ENCODE measurements at regions of chr11 and their contacts with region 1.

Region 1: DNA sequence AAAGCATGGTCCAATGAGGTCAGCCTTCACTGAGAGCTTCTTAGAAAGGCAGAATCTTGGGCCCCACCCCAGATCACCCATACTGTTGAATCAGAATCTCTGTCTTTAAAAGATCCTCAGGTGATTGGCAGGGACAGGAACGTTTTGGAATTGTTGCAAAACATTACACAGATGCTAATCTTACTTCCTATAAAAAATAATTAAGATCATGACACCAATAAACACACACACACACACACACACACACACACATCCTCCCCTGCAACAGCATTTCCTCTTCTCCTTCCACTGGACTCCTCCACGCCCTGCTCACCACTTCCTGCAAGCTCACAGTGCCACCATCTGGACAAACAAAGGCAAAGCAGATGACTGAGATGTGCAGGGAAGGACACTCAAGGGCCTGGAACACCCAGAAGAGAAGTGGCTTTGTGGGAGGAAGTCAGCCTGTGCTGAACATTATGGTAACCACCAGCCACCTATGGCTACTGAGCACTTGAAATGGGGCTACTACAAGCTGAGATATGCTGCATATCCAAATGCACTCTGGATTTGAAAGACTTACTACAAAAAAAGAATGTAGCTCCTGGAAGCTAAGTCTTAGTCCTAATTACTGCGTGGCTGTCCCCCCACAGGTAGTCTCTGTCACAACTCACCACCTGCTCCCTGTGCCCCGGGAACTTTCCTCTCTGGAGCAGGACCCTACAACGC is 65.6 kb downstream of the BTG4 start:
- DNase-seq: peak; percentile 81
- H3K4me3 ChIP-seq: no peak overlapping the region
- H3K27ac ChIP-seq: no peak overlapping the region
- H3K4me1 ChIP-seq: no peaks in the 10 kb centered on the region
- H3K27me3 ChIP-seq: no peaks in the 10 kb centered on the region
- CTCF ChIP-seq: peak; percentile 93 to 96

Region 2: DNA sequence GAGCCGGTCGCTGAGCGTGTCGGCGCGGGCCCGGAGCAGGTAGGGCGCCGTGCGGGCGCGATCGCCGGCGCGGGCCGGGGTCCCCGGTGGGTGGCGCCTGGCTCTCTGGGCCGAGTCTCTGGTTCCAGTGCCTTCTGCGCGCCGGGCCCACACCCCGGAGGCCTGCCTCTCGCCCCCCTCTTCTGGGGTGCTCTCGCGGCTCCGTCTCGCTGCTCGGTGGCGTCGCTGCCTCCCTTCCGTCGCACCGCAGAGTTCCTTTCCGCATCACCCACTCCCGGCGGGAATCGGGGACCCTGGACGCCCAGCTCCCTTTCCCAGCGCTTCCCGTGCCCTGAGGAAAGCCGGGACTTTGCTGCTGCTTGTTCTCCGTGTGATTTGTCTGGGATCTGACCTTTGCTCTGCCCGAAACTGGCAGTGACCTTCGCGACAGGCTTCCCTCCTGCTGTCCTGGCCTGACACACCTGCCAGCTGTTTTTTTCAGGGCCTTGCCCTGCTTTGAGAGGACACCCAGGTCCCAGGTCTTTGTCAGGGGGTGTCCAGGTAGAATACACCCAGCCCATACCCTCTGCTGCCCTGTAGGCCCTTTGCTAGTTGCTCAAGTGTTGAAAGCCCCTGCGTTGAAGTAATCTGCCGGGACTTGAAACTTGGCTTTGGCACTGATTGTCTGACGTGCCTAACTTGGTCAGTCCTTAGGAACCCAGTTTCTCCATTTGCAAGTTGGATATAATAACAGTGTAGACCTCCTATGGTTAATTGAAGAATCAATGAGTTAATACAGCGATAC is 1016.1 kb before region 1 on chr11:
- CTCF ChIA-PET with region 1: no interaction called
- dilution Hi-C with region 1: no loop called
- in situ Hi-C with region 1: no loop called
- intact Hi-C with region 1: loop called (anchors 2 kb)
- DNase-seq: peak; percentile 74
- H3K4me3 ChIP-seq: peak overlapping the region; percentile 60 to 93 (median 90)
- H3K27ac ChIP-seq: peak overlapping the region; percentile 67
- H3K4me1 ChIP-seq: peaks cover 17% of the 10 kb centered on the region
- H3K27me3 ChIP-seq: no peaks in the 10 kb centered on the region
- CTCF ChIP-seq: no peak

Region 3: DNA sequence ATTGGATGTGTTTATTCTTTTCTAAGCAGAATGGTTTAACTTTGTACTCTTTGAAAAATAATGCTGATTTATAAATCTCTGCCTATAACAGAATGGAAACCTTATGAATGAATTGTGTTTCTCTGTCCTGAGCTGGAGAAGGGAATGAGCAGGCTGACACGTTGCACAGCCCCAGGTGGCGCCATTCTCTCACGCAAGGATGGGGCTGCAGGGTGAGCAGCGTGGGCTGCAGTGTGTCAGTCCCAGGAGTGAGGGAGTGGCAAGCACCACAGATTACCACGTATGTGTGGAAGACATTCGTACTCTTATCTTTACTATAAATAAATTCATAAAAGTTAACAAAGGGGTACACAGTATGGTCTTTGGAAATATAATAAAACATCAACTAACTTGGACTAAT is 983.4 kb before region 1 on chr11:
- CTCF ChIA-PET with region 1: no interaction called
- dilution Hi-C with region 1: no loop called
- in situ Hi-C with region 1: loop called in 1 of 2 experiments (anchors 25 kb)
- intact Hi-C with region 1: loop called (anchors 1 kb)
- DNase-seq: no peak
- H3K4me3 ChIP-seq: no peak overlapping the region
- H3K27ac ChIP-seq: no peak overlapping the region
- H3K4me1 ChIP-seq: no peaks in the 10 kb centered on the region
- H3K27me3 ChIP-seq: no peaks in the 10 kb centered on the region
- CTCF ChIP-seq: peak; percentile 39 to 67

Region 4: GRCh38 chr11:111230122-111230465 is 216.5 kb before region 1 on chr11:
- CTCF ChIA-PET with region 1: no interaction called
- dilution Hi-C with region 1: no loop called
- in situ Hi-C with region 1: no loop called
- intact Hi-C with region 1: loop called (anchors 2 kb)
- DNase-seq: no peak
- H3K4me3 ChIP-seq: peak overlapping the region in 1 of 3 experiments; percentile 47
- H3K27ac ChIP-seq: no peak overlapping the region
- H3K4me1 ChIP-seq: no peaks in the 10 kb centered on the region
- H3K27me3 ChIP-seq: no peaks in the 10 kb centered on the region
- CTCF ChIP-seq: no peak

Region 5: DNA sequence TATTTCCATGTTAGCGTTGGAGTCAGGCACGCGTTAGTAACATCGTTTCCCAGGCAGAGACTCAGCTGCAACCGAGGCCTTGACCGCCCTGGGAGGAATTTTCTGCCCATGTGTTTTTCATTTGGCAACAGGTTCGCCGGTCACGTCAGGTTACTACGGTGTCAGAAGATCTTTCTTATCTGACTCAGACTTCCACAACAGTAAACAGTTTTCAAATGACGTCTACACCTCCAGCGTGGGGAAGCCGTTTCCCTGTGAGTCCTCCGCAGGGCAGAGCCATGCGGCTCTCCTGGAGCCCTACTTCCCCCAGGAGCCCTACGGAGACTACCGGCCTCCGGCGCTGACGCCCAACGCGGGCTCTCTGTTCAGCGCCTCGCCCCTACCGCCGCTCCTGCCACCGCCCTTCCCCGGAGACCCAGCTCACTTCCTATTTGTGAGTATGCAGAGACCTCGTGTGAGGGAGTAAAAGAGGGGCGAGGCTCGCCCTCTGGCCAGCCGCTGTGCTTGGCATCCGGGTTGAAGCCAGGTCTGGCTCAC is 162.5 kb before region 1 on chr11:
- CTCF ChIA-PET with region 1: no interaction called
- dilution Hi-C with region 1: loop called (anchors 25 kb)
- in situ Hi-C with region 1: loop called (anchors 5 kb)
- intact Hi-C with region 1: loop called (anchors 1 kb)
- DNase-seq: no peak
- H3K4me3 ChIP-seq: no peak overlapping the region
- H3K27ac ChIP-seq: no peak overlapping the region
- H3K4me1 ChIP-seq: no peaks in the 10 kb centered on the region
- H3K27me3 ChIP-seq: peaks cover 6% of the 10 kb centered on the region
- CTCF ChIP-seq: no peak

Region 6: GRCh38 chr11:111299101-111300026 is 147.2 kb before region 1 on chr11:
- CTCF ChIA-PET with region 1: no interaction called
- dilution Hi-C with region 1: loop called (anchors 25 kb)
- in situ Hi-C with region 1: no loop called
- intact Hi-C with region 1: no loop called
- DNase-seq: peak; percentile 17
- H3K4me3 ChIP-seq: peak overlapping the region; percentile 35 to 68 (median 55)
- H3K27ac ChIP-seq: no peak overlapping the region
- H3K4me1 ChIP-seq: peaks cover 7% of the 10 kb centered on the region
- H3K27me3 ChIP-seq: peaks cover 3% of the 10 kb centered on the region
- CTCF ChIP-seq: peak in 1 of 2 donors; percentile 59

Region 7: GRCh38 chr11:111422494-111423249 is 23.9 kb before region 1 on chr11:
- CTCF ChIA-PET with region 1: no interaction called
- dilution Hi-C with region 1: no loop called
- in situ Hi-C with region 1: no loop called
- intact Hi-C with region 1: loop called (anchors 2 kb)
- DNase-seq: no peak
- H3K4me3 ChIP-seq: no peak overlapping the region
- H3K27ac ChIP-seq: no peak overlapping the region
- H3K4me1 ChIP-seq: peaks cover 14% of the 10 kb centered on the region
- H3K27me3 ChIP-seq: no peaks in the 10 kb centered on the region
- CTCF ChIP-seq: peak; percentile 61 to 84